ENCODE measurements at regions of chr16 and their contacts with region 1.

Region 1: GRCh38 chr16:67183627-67184328 is at the start of gene MATCAP1:
- DNase-seq: peak; percentile 95 to 97 (median 96)
- ATAC-seq: peak; percentile 93 to 96 (median 94)
- H3K4me3 ChIP-seq: peak within 1 kb of the TSS; percentile 47 to 88 (median 72)
- H3K27ac ChIP-seq: peak within 1 kb of the TSS; percentile 90 to 100 (median 96)
- H3K4me1 ChIP-seq: peaks cover 0 to 50% (median 24%) of the 10 kb centered on the region in 12 donors
- H3K27me3 ChIP-seq: no peaks in the 10 kb centered on the region
- CTCF ChIP-seq: peak in 1 of 12 donors; percentile 10
- POLR2A ChIP-seq: peak in 1 of 2 donors; percentile 54
- total RNA-seq, gene MATCAP1: 4.1 to 21.6 (median 11.1) TPM

Region 2: DNA sequence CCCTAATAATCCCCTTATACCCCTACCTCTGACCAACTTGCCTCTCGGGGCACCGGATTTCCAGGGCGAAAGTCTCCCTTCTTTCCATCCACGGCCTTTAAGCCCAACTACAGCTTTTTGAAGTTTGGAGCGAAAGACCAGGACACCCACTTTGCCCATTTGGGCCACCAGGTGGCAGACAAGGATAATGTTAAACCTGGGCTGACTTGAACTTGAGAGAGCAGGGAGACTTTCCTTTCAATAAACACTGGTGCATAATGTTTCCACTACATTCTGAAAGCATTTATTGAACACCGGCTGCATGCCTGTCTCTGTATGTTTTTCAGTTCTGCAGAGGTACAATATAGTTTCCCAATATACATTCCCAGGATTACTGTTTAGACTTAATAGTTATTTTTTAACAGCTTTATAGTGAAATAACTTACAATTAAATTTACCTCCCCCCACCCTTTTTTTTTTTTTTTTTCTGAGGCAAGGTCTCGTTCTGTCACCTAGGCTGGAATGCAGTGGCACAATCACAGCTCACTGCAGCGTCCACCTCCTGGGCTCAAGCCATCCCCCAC is 229.6 kb before region 1 on chr16:
- intact Hi-C with region 1: loop called in 1 of 10 experiments (anchors 2 kb)
- DNase-seq: peak in 3 of 5 donors; percentile 66 to 73 (median 68)
- ATAC-seq: peak in 3 of 4 donors; percentile 71 to 80 (median 80)
- H3K4me3 ChIP-seq: no peak overlapping the region
- H3K27ac ChIP-seq: no peak overlapping the region
- H3K4me1 ChIP-seq: peaks cover 0 to 6% (median 0%) of the 10 kb centered on the region in 12 donors
- H3K27me3 ChIP-seq: peaks cover 0 to 25% (median 0%) of the 10 kb centered on the region in 9 donors
- CTCF ChIP-seq: peak; percentile 63 to 86 (median 78)
- POLR2A ChIP-seq: no peak

Region 3: GRCh38 chr16:67159593-67160406 is 24.0 kb before region 1 on chr16 and contains the starts of genes FBXL8 and TRADD:
- intact Hi-C with region 1: loop called in 2 of 10 experiments (anchors 1 to 2 kb)
- DNase-seq: peak; percentile 75 to 88 (median 82)
- ATAC-seq: peak; percentile 23 to 75 (median 71)
- H3K4me3 ChIP-seq: peak within 1 kb of the TSS; percentile 75 to 98 (median 97)
- H3K27ac ChIP-seq: peak within 1 kb of the TSS; percentile 36 to 94 (median 83)
- H3K4me1 ChIP-seq: peaks cover 0 to 68% (median 58%) of the 10 kb centered on the region in 12 donors
- H3K27me3 ChIP-seq: peaks cover 0 to 32% (median 2%) of the 10 kb centered on the region in 9 donors
- CTCF ChIP-seq: peak in 11 of 12 donors; percentile 7 to 59 (median 38)
- POLR2A ChIP-seq: peak in 1 of 2 donors; percentile 76
- total RNA-seq, gene FBXL8: 5.0 to 13.4 (median 7.2) TPM
- total RNA-seq, gene TRADD: 4.7 to 14.3 (median 8.4) TPM

Region 4: GRCh38 chr16:67226804-67227557 is 43.2 kb after region 1 on chr16 and contains the start of gene TMEM208:
- intact Hi-C with region 1: loop called in 1 of 10 experiments (anchors 2 kb)
- DNase-seq: peak; percentile 98 to 99 (median 99)
- ATAC-seq: peak; percentile 95 to 98 (median 96)
- H3K4me3 ChIP-seq: peak within 1 kb of the TSS; percentile 55 to 97 (median 84)
- H3K27ac ChIP-seq: peak within 1 kb of the TSS; percentile 66 to 94 (median 90)
- H3K4me1 ChIP-seq: peaks cover 2 to 32% (median 17%) of the 10 kb centered on the region in 12 donors
- H3K27me3 ChIP-seq: no peaks in the 10 kb centered on the region
- CTCF ChIP-seq: peak in 6 of 12 donors; percentile 1 to 39 (median 13)
- POLR2A ChIP-seq: peak in 1 of 2 donors; percentile 70
- total RNA-seq, gene TMEM208: 6.2 to 21.8 (median 11.9) TPM

Region 5: GRCh38 chr16:67246934-67247697 is 63.3 kb after region 1 on chr16 and contains the start of gene FHOD1:
- intact Hi-C with region 1: loop called in 1 of 10 experiments (anchors 2 kb)
- DNase-seq: peak; percentile 98 to 99 (median 99)
- ATAC-seq: peak; percentile 79 to 83 (median 80)
- H3K4me3 ChIP-seq: peak within 1 kb of the TSS; percentile 56 to 94 (median 86)
- H3K27ac ChIP-seq: peak within 1 kb of the TSS; percentile 82 to 100 (median 94)
- H3K4me1 ChIP-seq: peaks cover 27 to 73% (median 53%) of the 10 kb centered on the region in 12 donors
- H3K27me3 ChIP-seq: peaks cover 0 to 10% (median 0%) of the 10 kb centered on the region in 9 donors
- CTCF ChIP-seq: no peak
- POLR2A ChIP-seq: peak; percentile 75 to 95
- total RNA-seq, gene FHOD1: 9.6 to 30.3 (median 18.0) TPM

Measured in heart left ventricle (tissue), 16 donors.